HEK293 (cell line): ENCODE measurements at regions of chr1 and their contacts with region 1.

Region 1: DNA sequence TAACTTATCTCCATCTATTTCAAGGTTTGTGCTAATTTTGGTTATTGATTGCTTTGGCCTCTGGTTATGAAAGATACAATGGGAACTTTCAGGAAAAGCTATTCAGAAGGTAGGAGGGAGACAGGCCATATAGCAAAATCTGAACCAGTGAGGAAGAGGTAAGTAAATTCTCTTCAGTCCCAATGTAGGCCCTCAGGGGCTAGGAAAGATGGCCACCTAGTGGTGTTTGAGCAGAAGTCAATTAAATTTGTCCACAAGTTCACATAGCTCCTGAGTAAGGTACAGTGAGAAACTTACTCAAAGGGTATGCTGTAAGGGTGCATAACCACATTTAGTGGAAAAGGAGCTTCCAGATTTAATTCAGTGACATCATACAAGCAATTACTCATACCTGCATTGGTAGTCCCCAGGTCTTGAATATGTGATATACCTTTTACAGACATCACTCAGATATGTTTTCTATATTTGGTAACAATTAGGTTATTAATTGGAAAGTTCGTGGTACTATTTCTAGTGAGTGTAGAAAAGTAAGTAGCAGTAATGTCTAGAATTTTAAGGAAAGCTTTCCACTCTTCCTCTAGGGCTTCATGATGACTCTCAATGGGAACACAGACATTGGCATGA is 21.4 kb upstream of the FMO1 start:
- H3K4me3 ChIP-seq: no peak overlapping the region
- H3K27ac ChIP-seq: no peak overlapping the region
- H3K4me1 ChIP-seq: no peaks in the 10 kb centered on the region
- CTCF ChIP-seq: peak; percentile 73

Region 2: DNA sequence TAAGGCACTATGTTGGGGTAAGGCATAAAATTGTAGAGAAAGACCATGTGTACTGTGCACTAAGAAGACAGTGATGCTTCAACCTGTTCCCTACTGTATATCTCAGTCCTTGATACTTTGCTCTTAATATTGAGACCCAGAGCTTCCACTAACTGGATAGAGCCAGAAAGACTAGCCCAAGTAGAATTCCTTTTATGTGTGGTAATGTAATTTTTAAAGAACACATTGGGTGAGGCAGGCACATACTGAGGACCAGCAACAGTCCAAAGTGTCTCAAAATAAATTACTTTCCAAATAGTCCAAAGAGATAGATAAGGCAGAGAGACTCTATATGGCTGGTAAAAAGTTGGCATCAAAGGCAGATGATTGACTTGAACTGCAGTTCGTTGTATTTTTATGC is 322.9 kb before region 1 on chr1:
- CTCF ChIA-PET with region 1: no interaction called
- POLR2A ChIA-PET with region 1: no interaction called
- H3K4me3 ChIP-seq: no peak overlapping the region
- H3K27ac ChIP-seq: no peak overlapping the region
- H3K4me1 ChIP-seq: no peaks in the 10 kb centered on the region
- CTCF ChIP-seq: no peak

Region 3: DNA sequence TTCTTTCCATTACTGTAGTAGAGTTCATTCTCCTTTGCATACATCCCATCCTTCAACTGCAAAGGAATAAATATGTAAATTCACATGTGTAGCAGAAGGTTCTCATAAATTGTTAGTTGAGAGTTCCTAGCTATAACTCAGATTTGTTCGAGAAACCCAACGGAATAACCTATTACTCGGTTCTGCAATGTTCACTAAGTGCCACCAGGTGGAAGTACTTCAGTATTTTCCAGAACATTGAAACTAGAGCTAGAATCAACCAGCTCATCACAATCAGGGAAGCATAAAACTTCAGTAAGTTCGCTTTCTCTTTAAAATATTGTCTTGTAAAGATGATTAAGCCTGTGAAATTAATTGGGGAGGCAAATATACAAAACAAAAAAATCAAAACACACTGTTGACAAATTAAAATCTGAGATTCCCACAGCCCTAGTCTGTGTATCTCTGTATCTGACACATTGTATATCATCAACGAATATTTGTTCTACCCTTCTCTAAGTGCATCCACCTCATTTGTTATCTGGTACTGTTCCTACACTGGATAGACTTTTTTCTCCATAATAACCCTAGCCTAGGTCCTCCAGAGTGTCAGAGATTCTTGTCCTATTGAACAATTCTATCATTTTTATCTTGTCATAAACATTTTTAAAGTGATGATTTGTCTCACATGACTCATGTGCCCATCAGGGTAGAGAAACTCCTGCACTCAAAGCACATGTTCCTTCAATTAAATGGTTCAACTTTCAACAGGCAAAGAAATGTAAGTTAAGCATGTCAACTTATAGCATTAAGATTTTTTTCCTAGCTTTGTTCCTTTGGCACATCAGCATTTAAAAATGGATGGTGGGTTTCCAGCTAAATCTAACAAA is 259.6 kb before region 1 on chr1:
- CTCF ChIA-PET with region 1: interaction called, 50 read pairs
- POLR2A ChIA-PET with region 1: no interaction called
- H3K4me3 ChIP-seq: no peak overlapping the region
- H3K27ac ChIP-seq: no peak overlapping the region
- H3K4me1 ChIP-seq: no peaks in the 10 kb centered on the region
- CTCF ChIP-seq: no peak

Region 4: GRCh38 chr1:171081314-171081753 is 145.5 kb before region 1 on chr1:
- CTCF ChIA-PET with region 1: interaction called, 46 read pairs
- POLR2A ChIA-PET with region 1: no interaction called
- H3K4me3 ChIP-seq: no peak overlapping the region
- H3K27ac ChIP-seq: no peak overlapping the region
- H3K4me1 ChIP-seq: no peaks in the 10 kb centered on the region
- CTCF ChIP-seq: no peak

Region 5: GRCh38 chr1:171152549-171152948 is 74.3 kb before region 1 on chr1:
- CTCF ChIA-PET with region 1: no interaction called
- POLR2A ChIA-PET with region 1: no interaction called
- H3K4me3 ChIP-seq: no peak overlapping the region
- H3K27ac ChIP-seq: no peak overlapping the region
- H3K4me1 ChIP-seq: peaks cover 17% of the 10 kb centered on the region
- CTCF ChIP-seq: no peak

Region 6: DNA sequence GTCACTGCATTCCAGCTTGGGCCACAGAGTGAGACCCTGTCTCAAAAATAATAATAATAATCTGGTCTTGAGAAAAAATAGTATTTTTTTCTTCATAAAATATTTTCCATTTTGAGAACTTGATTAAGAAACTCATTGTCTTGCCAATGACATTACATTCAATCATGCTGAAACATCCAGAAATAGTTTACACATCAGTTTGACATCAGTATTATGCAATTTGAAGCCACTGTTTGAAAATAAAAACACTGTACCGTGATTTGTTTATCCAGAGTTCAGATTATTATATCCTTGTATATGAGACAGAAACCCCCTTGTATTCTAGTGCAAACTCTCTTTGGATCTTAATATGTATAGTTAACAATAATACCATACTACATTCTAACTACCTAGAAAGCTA is 34.9 kb before region 1 on chr1:
- CTCF ChIA-PET with region 1: interaction called, 10 read pairs
- POLR2A ChIA-PET with region 1: no interaction called
- H3K4me3 ChIP-seq: no peak overlapping the region
- H3K27ac ChIP-seq: no peak overlapping the region
- H3K4me1 ChIP-seq: no peaks in the 10 kb centered on the region
- CTCF ChIP-seq: no peak

Region 7: DNA sequence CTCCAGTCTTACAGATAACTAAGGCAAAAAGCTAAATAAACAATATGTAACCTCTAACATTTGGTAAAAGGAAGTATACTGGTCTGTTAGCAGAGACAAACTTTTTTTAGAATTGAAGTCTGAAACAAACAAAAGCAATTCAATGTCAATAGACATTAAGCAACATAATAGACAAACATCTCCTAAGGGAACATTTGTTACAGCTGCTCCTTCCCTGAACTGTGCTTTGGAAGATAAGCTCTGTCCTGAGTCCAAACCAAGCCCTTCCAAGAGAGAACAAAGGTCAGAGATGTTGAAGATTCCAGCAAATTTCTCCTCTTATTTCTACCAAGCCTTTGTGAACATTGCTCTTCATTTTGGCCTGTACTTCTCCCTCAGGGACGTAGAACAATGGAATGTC is 16.5 kb before region 1 on chr1:
- CTCF ChIA-PET with region 1: interaction called, 16 read pairs
- POLR2A ChIA-PET with region 1: no interaction called
- H3K4me3 ChIP-seq: no peak overlapping the region
- H3K27ac ChIP-seq: no peak overlapping the region
- H3K4me1 ChIP-seq: no peaks in the 10 kb centered on the region
- CTCF ChIP-seq: no peak

Region 8: GRCh38 chr1:171245458-171246064 is 18.7 kb after region 1 on chr1:
- CTCF ChIA-PET with region 1: interaction called, 14 read pairs
- POLR2A ChIA-PET with region 1: no interaction called
- H3K4me3 ChIP-seq: no peak overlapping the region
- H3K27ac ChIP-seq: no peak overlapping the region
- H3K4me1 ChIP-seq: no peaks in the 10 kb centered on the region
- CTCF ChIP-seq: 0 out of 2 replicates have a peak, but pooled peaks have one; percentile 26

Region 9: DNA sequence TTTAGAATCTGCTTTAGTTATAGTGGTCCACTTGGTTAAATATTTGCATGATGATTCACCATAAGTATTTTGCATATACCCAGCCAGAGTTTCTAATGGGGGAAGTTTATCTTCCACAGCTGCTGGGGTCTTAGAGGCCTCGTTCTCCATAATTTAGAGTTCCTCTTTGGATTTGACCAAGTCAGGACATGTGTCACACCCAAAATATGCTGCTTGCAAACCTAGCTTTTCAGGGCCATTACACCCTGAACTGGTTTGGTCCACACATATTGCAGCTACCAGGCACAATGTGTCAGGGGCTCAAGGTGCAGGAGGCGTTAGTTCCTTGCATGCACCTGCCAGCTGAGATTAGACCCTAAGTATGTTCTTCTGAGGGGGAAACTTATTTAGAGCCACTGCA is 70.0 kb after region 1 on chr1:
- CTCF ChIA-PET with region 1: no interaction called
- POLR2A ChIA-PET with region 1: no interaction called
- H3K4me3 ChIP-seq: no peak overlapping the region
- H3K27ac ChIP-seq: no peak overlapping the region
- H3K4me1 ChIP-seq: no peaks in the 10 kb centered on the region
- CTCF ChIP-seq: no peak

Region 10: GRCh38 chr1:171372456-171373084 is 145.7 kb after region 1 on chr1:
- CTCF ChIA-PET with region 1: no interaction called
- POLR2A ChIA-PET with region 1: no interaction called
- H3K4me3 ChIP-seq: no peak overlapping the region
- H3K27ac ChIP-seq: no peak overlapping the region
- H3K4me1 ChIP-seq: no peaks in the 10 kb centered on the region
- CTCF ChIP-seq: no peak